Calu3 (cell line): ENCODE measurements at regions of chr13 and their contacts with region 1.

Region 1: GRCh38 chr13:68304286-68304893 is 1074.3 kb upstream of the PCDH9 start:
- DNase-seq: peak; percentile 0
- H3K4me3 Mint-ChIP-seq: no peak overlapping the region
- H3K27ac Mint-ChIP-seq: no peak overlapping the region
- H3K4me1 Mint-ChIP-seq: no peaks in the 10 kb centered on the region
- H3K27me3 Mint-ChIP-seq: no peaks in the 10 kb centered on the region
- CTCF ChIP-seq: no peak

Region 2: DNA sequence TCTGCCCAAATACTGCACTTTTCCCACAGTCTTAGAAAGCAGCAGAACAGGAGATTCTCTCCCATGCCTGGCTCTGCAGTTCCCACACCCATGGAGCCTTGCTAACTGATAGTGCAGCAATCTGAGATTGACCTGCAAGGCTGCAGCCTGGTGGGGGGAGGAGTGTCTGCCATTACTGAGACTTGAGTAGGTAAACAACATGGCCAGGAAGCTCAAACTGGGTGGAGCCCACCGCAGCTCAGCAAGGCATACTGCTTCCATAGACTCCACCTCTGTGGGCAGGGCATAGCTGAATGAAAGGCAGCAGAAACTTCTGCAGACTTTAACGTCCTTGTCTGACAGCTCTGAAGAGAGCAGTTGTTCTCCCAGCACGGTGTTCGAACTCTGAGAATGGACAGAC is 715.8 kb before region 1 on chr13:
- CTCF ChIA-PET with region 1: no interaction called
- intact Hi-C with region 1: no loop called
- DNase-seq: no peak
- H3K4me3 Mint-ChIP-seq: no peak overlapping the region
- H3K27ac Mint-ChIP-seq: no peak overlapping the region
- H3K4me1 Mint-ChIP-seq: no peaks in the 10 kb centered on the region
- H3K27me3 Mint-ChIP-seq: no peaks in the 10 kb centered on the region
- CTCF ChIP-seq: no peak

Region 3: GRCh38 chr13:67726979-67727378 is 577.4 kb before region 1 on chr13:
- CTCF ChIA-PET with region 1: no interaction called
- intact Hi-C with region 1: no loop called
- DNase-seq: no peak
- H3K4me3 Mint-ChIP-seq: no peak overlapping the region
- H3K27ac Mint-ChIP-seq: no peak overlapping the region
- H3K4me1 Mint-ChIP-seq: no peaks in the 10 kb centered on the region
- H3K27me3 Mint-ChIP-seq: no peaks in the 10 kb centered on the region
- CTCF ChIP-seq: no peak

Region 4: GRCh38 chr13:68666774-68667397 is 362.5 kb after region 1 on chr13:
- CTCF ChIA-PET with region 1: no interaction called
- intact Hi-C with region 1: no loop called
- DNase-seq: no peak
- H3K4me3 Mint-ChIP-seq: no peak overlapping the region
- H3K27ac Mint-ChIP-seq: no peak overlapping the region
- H3K4me1 Mint-ChIP-seq: no peaks in the 10 kb centered on the region
- H3K27me3 Mint-ChIP-seq: no peaks in the 10 kb centered on the region
- CTCF ChIP-seq: no peak

Region 5: GRCh38 chr13:68927387-68928026 is 623.1 kb after region 1 on chr13:
- CTCF ChIA-PET with region 1: no interaction called
- intact Hi-C with region 1: loop called (anchors 2 kb)
- DNase-seq: peak; percentile 2
- H3K4me3 Mint-ChIP-seq: no peak overlapping the region
- H3K27ac Mint-ChIP-seq: no peak overlapping the region
- H3K4me1 Mint-ChIP-seq: no peaks in the 10 kb centered on the region
- H3K27me3 Mint-ChIP-seq: no peaks in the 10 kb centered on the region
- CTCF ChIP-seq: no peak

Region 6: DNA sequence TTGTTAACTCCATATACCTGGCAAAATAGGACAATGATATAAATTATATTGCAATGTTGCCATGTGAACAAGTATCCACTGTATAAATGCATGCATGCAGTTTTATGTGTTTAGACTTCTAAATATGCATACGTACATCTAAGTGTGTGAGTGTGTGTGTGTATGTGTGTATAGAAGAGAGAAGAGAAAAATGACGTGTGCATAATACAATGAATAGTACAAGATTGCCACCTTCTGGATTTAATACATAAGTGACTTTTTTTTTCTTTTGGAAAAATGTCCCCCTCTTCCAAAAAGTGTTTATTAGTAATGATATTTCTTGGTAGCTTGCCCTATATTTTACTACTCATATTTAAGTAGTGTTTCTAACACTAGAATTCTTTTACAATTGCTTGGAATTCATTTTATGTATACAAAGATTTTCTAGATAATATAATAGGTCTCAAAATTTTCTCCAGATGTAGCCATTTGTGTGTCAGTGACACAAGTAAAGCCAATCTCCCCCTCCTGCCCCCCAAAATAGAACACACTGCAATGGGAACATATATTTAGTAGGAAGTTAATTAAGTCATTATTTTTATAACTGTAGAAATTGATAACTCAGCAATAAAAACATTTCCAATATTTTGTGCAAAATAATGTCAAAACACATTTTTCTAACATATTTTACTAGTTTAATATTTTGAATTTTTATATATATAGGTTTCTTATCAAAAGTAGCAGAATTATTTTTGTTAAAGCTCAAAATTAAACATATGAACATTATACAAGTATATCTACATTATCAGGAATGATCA is 1019.9 kb after region 1 on chr13:
- CTCF ChIA-PET with region 1: no interaction called
- intact Hi-C with region 1: loop called (anchors 5 kb)
- DNase-seq: no peak
- H3K4me3 Mint-ChIP-seq: no peak overlapping the region
- H3K27ac Mint-ChIP-seq: no peak overlapping the region
- H3K4me1 Mint-ChIP-seq: no peaks in the 10 kb centered on the region
- H3K27me3 Mint-ChIP-seq: no peaks in the 10 kb centered on the region
- CTCF ChIP-seq: no peak